Colonic mucosa (tissue), 4 donors: ENCODE measurements at regions of chr12 and their contacts with region 1.

Region 1: GRCh38 chr12:42023733-42024494 is 120.8 kb downstream of the GXYLT1 start:
- DNase-seq: peak; percentile 67
- H3K4me3 ChIP-seq: no peak overlapping the region
- H3K27ac ChIP-seq: no peak overlapping the region
- H3K4me1 ChIP-seq: no peaks in the 10 kb centered on the region
- H3K27me3 ChIP-seq: no peaks in the 10 kb centered on the region
- CTCF ChIP-seq: peak; percentile 92

Region 2: GRCh38 chr12:41277116-41277945 is 746.6 kb before region 1 on chr12:
- intact Hi-C with region 1: loop called (anchors 5 kb)
- DNase-seq: no peak
- H3K4me3 ChIP-seq: no peak overlapping the region
- H3K27ac ChIP-seq: no peak overlapping the region
- H3K4me1 ChIP-seq: no peaks in the 10 kb centered on the region
- H3K27me3 ChIP-seq: no peaks in the 10 kb centered on the region
- CTCF ChIP-seq: peak; percentile 63

Region 3: DNA sequence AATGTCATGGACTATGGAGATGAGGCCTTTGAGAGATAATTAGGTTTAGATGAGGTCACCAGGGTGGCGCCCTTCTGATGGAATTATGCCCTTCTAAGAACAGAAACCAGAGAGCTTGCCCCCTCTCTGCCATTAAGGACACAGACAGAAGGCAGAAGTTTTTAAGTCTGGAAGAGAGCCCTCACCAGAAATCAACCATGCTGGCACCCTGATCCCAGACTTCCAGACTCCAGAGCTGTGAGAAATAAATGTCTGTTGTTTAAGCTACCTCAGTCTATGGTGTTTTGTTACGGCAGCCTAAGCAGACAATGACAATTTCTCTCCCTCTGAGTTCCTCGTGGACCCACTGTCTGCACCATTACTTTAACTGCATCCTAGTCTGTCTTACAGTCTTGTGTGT is 261.2 kb before region 1 on chr12:
- intact Hi-C with region 1: no loop called
- DNase-seq: no peak
- H3K4me3 ChIP-seq: no peak overlapping the region
- H3K27ac ChIP-seq: no peak overlapping the region
- H3K4me1 ChIP-seq: no peaks in the 10 kb centered on the region
- H3K27me3 ChIP-seq: no peaks in the 10 kb centered on the region
- CTCF ChIP-seq: no peak

Region 4: DNA sequence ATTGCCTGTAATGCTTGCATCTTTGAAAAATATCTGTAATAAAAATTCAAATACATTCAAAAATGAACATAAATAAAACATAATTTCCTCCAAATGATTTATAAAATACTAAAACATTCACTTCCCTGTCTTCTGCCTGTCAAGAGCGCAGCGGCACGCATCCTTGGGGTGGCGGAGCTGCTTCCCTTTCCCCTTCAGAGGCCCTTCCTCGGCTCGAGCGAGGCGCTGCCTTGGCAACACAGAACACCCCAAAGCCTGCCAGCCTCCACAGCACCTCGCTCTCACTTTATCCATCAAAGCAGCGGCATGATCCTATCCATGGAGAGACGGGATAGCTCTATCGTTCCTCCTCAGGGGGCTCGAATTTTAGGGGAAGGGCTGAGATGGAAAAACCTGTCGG is 25.5 kb before region 1 on chr12:
- intact Hi-C with region 1: no loop called
- DNase-seq: no peak
- H3K4me3 ChIP-seq: no peak overlapping the region
- H3K27ac ChIP-seq: no peak overlapping the region
- H3K4me1 ChIP-seq: no peaks in the 10 kb centered on the region
- H3K27me3 ChIP-seq: no peaks in the 10 kb centered on the region
- CTCF ChIP-seq: no peak

Region 5: DNA sequence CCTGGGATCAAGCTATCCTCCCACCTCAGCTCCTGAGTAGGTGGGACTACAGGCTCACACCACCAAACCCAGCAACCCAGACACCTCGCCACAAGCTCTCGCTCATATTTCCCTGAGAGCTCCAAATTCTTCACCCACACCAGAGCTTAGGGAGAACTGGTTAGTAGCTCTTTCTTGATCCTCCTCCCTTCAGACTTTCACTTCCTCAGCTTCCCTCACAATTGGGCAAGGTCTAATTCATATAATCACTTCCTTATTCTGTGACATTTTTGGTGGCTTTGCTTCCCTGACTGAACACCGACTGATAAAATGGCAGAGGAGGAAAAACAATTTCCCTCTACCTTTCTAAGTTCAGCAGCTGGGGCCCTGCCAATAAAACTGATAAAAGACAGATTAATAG is 32.2 kb after region 1 on chr12:
- intact Hi-C with region 1: no loop called
- DNase-seq: no peak
- H3K4me3 ChIP-seq: no peak overlapping the region
- H3K27ac ChIP-seq: no peak overlapping the region
- H3K4me1 ChIP-seq: no peaks in the 10 kb centered on the region
- H3K27me3 ChIP-seq: no peaks in the 10 kb centered on the region
- CTCF ChIP-seq: no peak

Region 6: DNA sequence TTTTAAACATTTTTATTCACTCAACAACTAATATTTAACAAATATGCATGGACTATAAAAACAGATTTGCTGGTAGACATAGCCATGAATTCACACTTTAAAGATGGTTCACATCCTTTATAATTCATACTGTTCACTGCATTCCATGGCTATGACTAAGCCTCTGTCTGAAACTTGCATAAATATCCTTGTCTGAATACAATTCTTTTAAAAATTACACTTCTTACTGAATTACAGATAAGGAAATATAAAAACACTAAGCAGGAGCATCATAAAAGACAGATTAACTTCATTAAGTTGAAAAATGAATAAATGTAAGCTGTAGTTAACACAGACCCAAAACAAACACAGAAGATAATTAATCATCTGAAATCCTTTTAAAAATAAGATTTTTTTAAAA is 67.0 kb after region 1 on chr12:
- intact Hi-C with region 1: no loop called
- DNase-seq: no peak
- H3K4me3 ChIP-seq: no peak overlapping the region
- H3K27ac ChIP-seq: no peak overlapping the region
- H3K4me1 ChIP-seq: no peaks in the 10 kb centered on the region
- H3K27me3 ChIP-seq: no peaks in the 10 kb centered on the region
- CTCF ChIP-seq: no peak